Calu3 (cell line): ENCODE measurements at regions of chr7 and their contacts with region 1.

Region 1: GRCh38 chr7:4610768-4611467 is 71.2 kb upstream of the FOXK1 start:
- DNase-seq: peak; percentile 79
- H3K4me3 Mint-ChIP-seq: no peak overlapping the region
- H3K27ac Mint-ChIP-seq: no peak overlapping the region
- H3K4me1 Mint-ChIP-seq: peaks cover 22% of the 10 kb centered on the region
- H3K27me3 Mint-ChIP-seq: peaks cover 24% of the 10 kb centered on the region
- CTCF ChIP-seq: peak; percentile 92

Region 2: GRCh38 chr7:4531236-4531635 is 79.7 kb before region 1 on chr7:
- CTCF ChIA-PET with region 1: no interaction called
- intact Hi-C with region 1: no loop called
- DNase-seq: no peak
- H3K4me3 Mint-ChIP-seq: no peak overlapping the region
- H3K27ac Mint-ChIP-seq: no peak overlapping the region
- H3K4me1 Mint-ChIP-seq: no peaks in the 10 kb centered on the region
- H3K27me3 Mint-ChIP-seq: peaks cover 62% of the 10 kb centered on the region
- CTCF ChIP-seq: no peak

Region 3: DNA sequence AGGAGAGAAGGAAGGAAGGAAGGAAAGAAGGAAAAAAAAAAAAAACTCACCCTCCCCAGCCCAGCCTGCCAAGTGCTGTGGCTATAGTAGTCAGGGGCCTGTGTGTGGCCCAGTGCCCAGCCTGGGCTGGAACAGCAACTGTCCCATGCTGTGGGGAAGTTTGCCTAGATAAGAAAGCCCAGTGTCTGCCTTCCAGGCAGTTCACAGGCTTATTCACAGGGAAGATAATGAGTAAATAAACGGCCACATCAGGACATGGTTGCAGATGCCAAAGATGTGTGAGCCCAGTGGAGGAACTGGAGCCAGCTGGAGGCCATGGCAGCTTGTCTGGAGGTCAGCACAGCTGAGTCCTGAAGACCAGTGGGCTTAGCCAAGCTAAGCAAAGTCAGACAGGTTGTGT is 61.2 kb before region 1 on chr7:
- CTCF ChIA-PET with region 1: interaction called, 3 read pairs
- intact Hi-C with region 1: loop called (anchors 10 kb)
- DNase-seq: no peak
- H3K4me3 Mint-ChIP-seq: no peak overlapping the region
- H3K27ac Mint-ChIP-seq: no peak overlapping the region
- H3K4me1 Mint-ChIP-seq: no peaks in the 10 kb centered on the region
- H3K27me3 Mint-ChIP-seq: peaks cover 53% of the 10 kb centered on the region
- CTCF ChIP-seq: no peak

Region 4: DNA sequence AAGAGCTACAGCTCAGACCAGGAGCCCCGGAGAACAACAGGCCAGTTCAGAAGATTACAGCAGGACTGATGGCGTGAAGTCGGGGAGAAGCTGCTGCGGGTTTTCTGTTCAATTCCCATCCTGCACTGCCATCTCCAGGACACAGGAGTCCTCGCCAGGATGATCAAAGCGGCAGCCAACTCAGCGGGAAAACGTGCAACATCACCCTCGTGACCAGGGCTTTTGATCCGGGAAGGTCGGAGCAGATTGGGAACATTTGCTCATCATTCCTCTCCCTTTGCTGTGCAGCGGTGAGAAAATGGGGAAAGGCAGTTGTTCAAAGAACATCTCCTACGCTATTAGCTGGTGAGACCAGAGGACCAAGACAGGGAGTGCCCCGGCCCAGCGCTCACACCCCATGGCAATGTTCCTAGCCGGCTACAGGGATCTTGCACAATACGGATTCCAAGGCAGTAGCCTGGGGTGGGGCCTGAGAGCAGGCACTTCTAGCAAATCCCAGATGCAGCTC is 20.8 kb after region 1 on chr7:
- CTCF ChIA-PET with region 1: interaction called, 16 read pairs
- intact Hi-C with region 1: loop called (anchors 1 kb)
- DNase-seq: peak; percentile 87
- H3K4me3 Mint-ChIP-seq: peak overlapping the region; percentile 64
- H3K27ac Mint-ChIP-seq: peak overlapping the region; percentile 57
- H3K4me1 Mint-ChIP-seq: peaks cover 11% of the 10 kb centered on the region
- H3K27me3 Mint-ChIP-seq: peaks cover 16% of the 10 kb centered on the region
- CTCF ChIP-seq: peak; percentile 67

Region 5: DNA sequence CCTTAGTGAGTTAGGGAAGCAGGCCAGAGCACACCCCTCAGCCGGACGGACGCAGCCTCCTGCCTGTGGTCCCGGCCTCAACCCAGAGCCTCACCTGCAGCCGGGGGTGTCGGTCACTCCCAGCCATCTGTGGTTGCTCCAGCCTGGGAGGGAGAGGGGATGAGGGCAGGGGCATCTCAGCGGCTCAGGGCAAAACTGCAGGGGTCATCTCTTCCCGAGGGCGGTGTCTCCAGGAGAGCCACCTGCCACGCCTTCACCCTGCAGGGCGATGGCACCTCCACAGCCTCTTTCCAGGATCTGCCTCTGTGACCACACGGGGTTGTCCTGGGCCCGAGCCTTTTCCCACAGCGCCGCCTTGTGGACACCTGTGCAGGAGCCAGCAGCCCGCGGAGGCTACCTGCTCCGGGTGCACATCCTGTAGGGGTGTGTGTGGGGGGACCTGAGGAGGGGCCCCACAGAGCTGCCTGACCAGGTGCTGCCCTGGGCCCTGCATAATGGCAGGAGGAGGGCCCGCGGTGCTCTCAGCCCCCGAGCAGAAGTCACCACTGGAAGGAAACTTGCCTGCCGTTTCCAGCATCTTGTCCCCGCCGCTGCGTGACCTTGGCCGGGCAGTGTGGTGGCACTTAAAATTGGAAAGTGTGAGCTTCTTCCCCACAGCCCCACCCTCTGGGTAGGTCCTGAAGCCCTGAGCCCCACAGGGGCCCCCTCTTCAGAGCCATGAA is 143.0 kb after region 1 on chr7:
- CTCF ChIA-PET with region 1: no interaction called
- intact Hi-C with region 1: loop called (anchors 10 kb)
- DNase-seq: peak; percentile 96
- H3K4me3 Mint-ChIP-seq: no peak overlapping the region
- H3K27ac Mint-ChIP-seq: peak overlapping the region; percentile 20
- H3K4me1 Mint-ChIP-seq: no peaks in the 10 kb centered on the region
- H3K27me3 Mint-ChIP-seq: no peaks in the 10 kb centered on the region
- CTCF ChIP-seq: peak; percentile 96